CD4-positive, alpha-beta memory T cell (primary cell): ENCODE measurements at regions of chr1 and their contacts with region 1.

Region 1: DNA sequence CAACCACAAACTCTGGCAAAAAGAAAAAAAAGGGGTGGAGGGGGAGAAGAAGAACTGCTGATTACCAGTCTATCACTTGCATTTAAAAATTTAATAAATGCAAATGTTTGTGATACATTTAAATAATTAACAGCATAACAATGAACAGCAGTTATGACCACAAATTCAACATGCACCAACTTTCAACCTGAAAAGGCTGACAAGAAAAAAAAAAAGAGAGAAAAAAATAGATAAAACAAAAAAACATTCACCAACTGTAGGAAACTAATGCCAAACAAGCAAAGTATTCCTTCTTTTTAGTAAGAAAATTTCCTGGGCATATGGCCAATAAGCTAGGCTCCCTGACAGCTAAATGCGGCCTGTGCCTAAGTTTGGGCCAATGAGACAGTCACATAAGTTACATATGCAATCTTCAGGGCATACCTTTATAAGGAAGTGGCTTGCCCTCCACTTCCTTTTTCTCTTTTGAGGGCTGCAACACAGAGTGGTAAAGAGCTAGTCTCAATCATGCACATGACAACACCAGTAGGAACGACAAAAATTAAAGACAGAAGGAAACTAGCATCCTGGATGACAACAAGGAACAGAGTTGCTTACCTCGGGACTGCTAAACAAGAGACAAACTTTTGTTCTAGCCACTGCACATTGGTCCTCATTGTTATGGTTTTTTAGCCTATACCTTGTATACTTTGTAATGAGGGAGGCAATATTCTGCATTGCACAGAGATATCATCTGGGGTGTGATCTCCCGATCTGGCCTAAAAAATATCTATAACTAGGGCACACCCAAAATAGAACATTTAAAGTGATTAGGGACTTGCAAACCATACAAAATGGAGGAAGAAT is 24.2 kb upstream of the PHTF1 start:
- DNase-seq: peak; percentile 66 to 84 (median 73)
- H3K4me3 ChIP-seq: peak overlapping the region in 1 of 2 donors; percentile 14
- H3K4me3 Mint-ChIP-seq: peak overlapping the region in 7 of 8 donors; percentile 44 to 89 (median 72)
- H3K27ac ChIP-seq: peak overlapping the region; percentile 48
- H3K27ac Mint-ChIP-seq: peak overlapping the region in 2 of 7 donors; percentile 77 to 93
- H3K4me1 ChIP-seq: peaks cover 100% of the 10 kb centered on the region
- H3K4me1 Mint-ChIP-seq: peaks cover 30 to 47% (median 38%) of the 10 kb centered on the region in 4 donors
- H3K27me3 ChIP-seq: no peaks in the 10 kb centered on the region
- H3K27me3 Mint-ChIP-seq: no peaks in the 10 kb centered on the region

Region 2: DNA sequence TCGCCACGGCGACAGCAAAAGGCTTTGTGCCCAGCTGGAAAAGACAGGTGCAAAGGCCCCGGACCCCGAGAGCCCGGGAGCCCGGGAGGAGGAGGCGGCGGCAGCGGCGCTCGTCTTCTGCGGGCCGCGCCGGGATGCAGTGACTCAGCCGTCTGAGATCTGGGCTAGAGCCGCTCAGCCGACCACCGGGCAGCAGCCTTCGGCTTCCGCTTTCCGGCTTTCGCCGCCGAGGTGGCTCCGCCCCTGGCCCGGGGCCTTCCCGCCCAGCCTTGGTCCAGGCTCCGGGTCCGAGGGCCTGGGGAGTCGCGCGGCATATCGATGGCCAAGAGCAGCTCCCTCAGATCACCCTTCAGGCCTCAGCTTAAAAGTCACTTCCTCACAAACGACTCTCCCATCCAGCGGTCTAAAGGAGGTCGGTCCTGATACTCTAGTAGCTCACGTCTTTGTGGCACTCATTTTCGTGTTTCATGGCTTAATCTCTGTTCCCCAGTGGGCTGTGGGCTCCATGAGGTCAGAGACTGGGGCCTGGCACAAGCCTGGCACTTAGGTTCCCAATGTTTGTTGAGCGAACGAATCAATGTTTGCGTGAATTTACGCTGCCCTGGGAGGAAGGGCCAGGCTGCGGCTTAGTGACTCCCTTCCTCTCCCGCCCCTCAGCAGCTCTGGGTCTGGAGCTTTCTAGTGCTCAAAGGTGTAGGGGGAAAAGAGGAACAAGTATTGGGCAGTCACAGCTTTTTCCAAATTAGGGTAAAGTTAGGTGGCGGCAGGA is 24.0 kb before region 1 on chr1 and contains the start of gene PHTF1:
- CTCF ChIA-PET with region 1: interaction called, 17 read pairs
- POLR2A ChIA-PET with region 1: interaction called, 45 read pairs
- intact Hi-C with region 1: loop called (anchors 2 kb)
- DNase-seq: peak in 4 of 5 donors; percentile 33 to 70 (median 46)
- H3K4me3 ChIP-seq: peak within 1 kb of the TSS; percentile 59 to 77
- H3K4me3 Mint-ChIP-seq: peak within 1 kb of the TSS; percentile 92 to 98 (median 94)
- H3K27ac ChIP-seq: peak within 1 kb of the TSS; percentile 91
- H3K27ac Mint-ChIP-seq: peak within 1 kb of the TSS; percentile 94 to 98 (median 97)
- H3K4me1 ChIP-seq: peaks cover 16% of the 10 kb centered on the region
- H3K4me1 Mint-ChIP-seq: peaks cover 16 to 36% (median 25%) of the 10 kb centered on the region in 4 donors
- H3K27me3 ChIP-seq: no peaks in the 10 kb centered on the region
- H3K27me3 Mint-ChIP-seq: no peaks in the 10 kb centered on the region
- total RNA-seq, gene PHTF1: 8.7 to 9.8 TPM

Region 3: DNA sequence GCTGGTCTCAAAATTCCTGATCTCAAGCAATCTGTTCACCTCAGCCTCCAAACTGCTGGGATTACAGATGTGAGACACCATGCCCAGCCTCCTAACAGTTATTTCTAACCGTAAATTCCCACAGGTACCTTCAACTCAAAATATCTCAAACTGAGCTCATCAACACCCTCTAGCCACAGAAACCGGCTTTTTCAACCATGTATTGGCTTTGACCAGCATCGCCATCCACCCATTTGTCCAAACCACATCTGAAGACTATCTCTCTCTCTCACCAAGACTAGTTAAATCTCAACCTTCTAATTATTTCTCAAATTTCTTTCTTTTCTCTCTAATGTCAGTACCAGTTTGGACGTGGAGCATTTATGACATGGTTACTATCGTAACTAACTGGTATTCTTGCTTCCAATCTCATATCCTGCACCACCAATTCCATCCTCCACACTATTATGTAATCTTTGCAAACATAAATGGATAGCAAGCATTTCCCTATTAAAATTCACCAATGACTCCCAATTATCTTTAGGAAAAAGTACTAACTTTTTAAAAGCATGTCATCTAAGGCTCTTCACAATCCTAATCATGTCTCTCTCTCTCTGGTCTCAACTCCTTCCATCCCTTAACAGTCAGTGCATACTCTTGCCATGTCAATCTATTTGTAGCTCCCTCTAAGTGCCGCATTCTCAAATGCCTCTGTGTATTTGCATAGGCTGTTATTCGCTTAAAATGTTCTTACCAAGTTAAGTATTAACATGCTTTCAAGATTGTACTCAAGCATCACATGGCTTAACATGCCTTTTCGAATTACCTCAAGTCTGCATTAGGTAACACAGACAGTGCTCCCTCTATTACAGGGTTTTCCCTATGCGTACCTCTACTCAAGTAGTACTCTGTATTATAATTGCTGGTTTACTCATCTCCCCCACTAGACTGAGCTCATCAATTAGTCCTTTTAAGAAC is 10.7 kb after region 1 on chr1:
- CTCF ChIA-PET with region 1: interaction called, 4 read pairs
- POLR2A ChIA-PET with region 1: interaction called, 17 read pairs
- intact Hi-C with region 1: no loop called
- DNase-seq: no peak
- H3K4me3 ChIP-seq: no peak overlapping the region
- H3K4me3 Mint-ChIP-seq: peak overlapping the region in 5 of 8 donors; percentile 1 to 35 (median 19)
- H3K27ac ChIP-seq: no peak overlapping the region
- H3K27ac Mint-ChIP-seq: peak overlapping the region in 6 of 7 donors; percentile 18 to 86 (median 60)
- H3K4me1 ChIP-seq: peaks cover 56% of the 10 kb centered on the region
- H3K4me1 Mint-ChIP-seq: peaks cover 47 to 84% (median 60%) of the 10 kb centered on the region in 4 donors
- H3K27me3 ChIP-seq: no peaks in the 10 kb centered on the region
- H3K27me3 Mint-ChIP-seq: no peaks in the 10 kb centered on the region